ACHN (cell line): ENCODE measurements at regions of chr13 and their contacts with region 1.

Region 1: GRCh38 chr13:98142380-98143156 is at the start of gene FARP1:
- DNase-seq: peak; percentile 80

Region 2: GRCh38 chr13:97798836-97799235 is 343.7 kb before region 1 on chr13:
- in situ Hi-C with region 1: no loop called
- DNase-seq: no peak

Region 3: DNA sequence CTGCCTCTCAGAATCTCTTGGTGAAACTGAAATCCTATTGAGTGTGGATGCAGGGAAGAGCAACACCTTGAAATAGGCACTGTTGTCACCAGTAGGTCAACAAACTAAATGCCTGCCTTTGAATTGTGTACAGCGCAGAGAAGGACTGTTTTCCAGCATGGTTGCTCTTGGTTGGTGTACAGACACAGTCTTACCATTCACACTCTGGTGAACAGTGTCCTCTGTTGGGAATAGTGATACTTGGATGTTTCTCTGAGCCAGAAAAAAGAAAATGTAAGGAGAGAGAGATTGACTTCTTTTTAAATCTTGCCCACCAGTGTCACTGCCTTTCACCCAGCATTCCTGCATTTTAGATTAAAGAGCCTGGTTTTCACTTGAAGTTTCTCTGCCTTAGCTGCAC is 254.7 kb after region 1 on chr13:
- in situ Hi-C with region 1: loop called (anchors 25 kb)
- DNase-seq: no peak